HCT116 (cell line): ENCODE measurements at regions of chr12 and their contacts with region 1.

Region 1: DNA sequence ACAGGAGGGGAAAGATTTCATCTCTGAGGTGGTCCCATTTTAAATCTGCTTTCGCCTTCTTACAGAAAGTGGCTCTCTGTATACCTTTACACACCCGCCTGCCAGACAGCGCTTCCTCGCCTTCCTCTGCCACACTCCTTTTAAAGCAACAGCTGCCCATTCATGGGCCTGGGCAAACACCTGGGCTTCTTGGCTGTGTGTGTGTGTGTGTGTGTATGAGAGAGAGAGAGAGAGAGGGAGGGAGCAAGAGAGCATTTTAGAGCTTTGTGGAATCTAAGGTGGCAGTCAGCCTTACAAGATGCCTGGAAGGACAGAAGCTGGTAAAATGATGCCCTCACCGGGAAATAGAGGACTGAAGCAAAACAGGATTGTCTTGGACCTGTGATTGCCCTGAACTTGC is 20.0 kb downstream of the PTHLH start:
- DNase-seq: no peak
- ATAC-seq: no peak
- H3K4me3 ChIP-seq: no peak overlapping the region
- H3K27ac ChIP-seq: no peak overlapping the region
- H3K4me1 ChIP-seq: no peaks in the 10 kb centered on the region
- H3K27me3 ChIP-seq: no peaks in the 10 kb centered on the region
- CTCF ChIP-seq: no peak
- POLR2A ChIP-seq: no peak
- RAD21 ChIP-seq: no peak

Region 2: GRCh38 chr12:27940756-27941402 is 11.6 kb before region 1 on chr12:
- CTCF ChIA-PET with region 1: interaction called, 12 read pairs
- POLR2A ChIA-PET with region 1: no interaction called
- RAD21 ChIA-PET with region 1: no interaction called
- intact Hi-C with region 1: no loop called
- DNase-seq: peak; percentile 77
- ATAC-seq: peak; percentile 97
- H3K4me3 ChIP-seq: no peak overlapping the region
- H3K27ac ChIP-seq: no peak overlapping the region
- H3K4me1 ChIP-seq: peaks cover 0 to 4% of the 10 kb centered on the region in 2 experiments; a peak in 1 of 4 replicates
- H3K27me3 ChIP-seq: no peaks in the 10 kb centered on the region
- CTCF ChIP-seq: peak; percentile 69 to 94 (median 85); a peak in 5 of 6 replicates
- POLR2A ChIP-seq: no peak
- RAD21 ChIP-seq: peak; percentile 78

Region 3: DNA sequence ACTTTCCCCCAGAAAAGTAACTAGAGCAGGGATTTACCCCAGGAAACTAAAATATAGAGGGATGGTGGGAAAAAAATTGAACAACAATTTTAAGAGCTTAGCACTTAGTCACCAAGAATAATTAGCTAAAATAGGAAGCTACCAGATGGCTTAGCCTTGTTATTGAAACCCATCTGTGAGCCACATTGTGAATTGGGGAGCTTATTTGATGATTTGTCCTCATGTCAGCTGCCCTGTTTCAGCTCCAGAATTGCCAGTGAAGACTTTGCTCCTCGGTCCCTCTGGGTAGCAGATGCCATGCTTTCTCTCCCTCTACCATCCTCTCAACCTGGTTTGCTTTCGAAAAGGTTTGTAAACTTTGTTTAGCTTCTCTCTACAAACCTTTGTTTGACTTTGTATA is 87.7 kb after region 1 on chr12:
- CTCF ChIA-PET with region 1: no interaction called
- POLR2A ChIA-PET with region 1: no interaction called
- RAD21 ChIA-PET with region 1: no interaction called
- intact Hi-C with region 1: no loop called
- DNase-seq: no peak
- ATAC-seq: no peak
- H3K4me3 ChIP-seq: no peak overlapping the region
- H3K27ac ChIP-seq: no peak overlapping the region
- H3K4me1 ChIP-seq: no peaks in the 10 kb centered on the region; a peak in 1 of 4 replicates
- H3K27me3 ChIP-seq: no peaks in the 10 kb centered on the region
- CTCF ChIP-seq: no peak
- POLR2A ChIP-seq: no peak
- RAD21 ChIP-seq: no peak